Left lung (tissue), 14 donors: ENCODE measurements at regions of chr2 and their contacts with region 1.

Region 1: GRCh38 chr2:210195101-210195852 is 24.1 kb upstream of the KANSL1L start:
- DNase-seq: peak in 1 of 4 donors; percentile 60
- ATAC-seq: peak; percentile 38
- H3K4me3 ChIP-seq: no peak overlapping the region
- H3K27ac ChIP-seq: no peak overlapping the region
- H3K4me1 ChIP-seq: peaks cover 0 to 12% of the 10 kb centered on the region in 2 donors
- H3K27me3 ChIP-seq: no peaks in the 10 kb centered on the region
- CTCF ChIP-seq: peak; percentile 54 to 60

Region 2: DNA sequence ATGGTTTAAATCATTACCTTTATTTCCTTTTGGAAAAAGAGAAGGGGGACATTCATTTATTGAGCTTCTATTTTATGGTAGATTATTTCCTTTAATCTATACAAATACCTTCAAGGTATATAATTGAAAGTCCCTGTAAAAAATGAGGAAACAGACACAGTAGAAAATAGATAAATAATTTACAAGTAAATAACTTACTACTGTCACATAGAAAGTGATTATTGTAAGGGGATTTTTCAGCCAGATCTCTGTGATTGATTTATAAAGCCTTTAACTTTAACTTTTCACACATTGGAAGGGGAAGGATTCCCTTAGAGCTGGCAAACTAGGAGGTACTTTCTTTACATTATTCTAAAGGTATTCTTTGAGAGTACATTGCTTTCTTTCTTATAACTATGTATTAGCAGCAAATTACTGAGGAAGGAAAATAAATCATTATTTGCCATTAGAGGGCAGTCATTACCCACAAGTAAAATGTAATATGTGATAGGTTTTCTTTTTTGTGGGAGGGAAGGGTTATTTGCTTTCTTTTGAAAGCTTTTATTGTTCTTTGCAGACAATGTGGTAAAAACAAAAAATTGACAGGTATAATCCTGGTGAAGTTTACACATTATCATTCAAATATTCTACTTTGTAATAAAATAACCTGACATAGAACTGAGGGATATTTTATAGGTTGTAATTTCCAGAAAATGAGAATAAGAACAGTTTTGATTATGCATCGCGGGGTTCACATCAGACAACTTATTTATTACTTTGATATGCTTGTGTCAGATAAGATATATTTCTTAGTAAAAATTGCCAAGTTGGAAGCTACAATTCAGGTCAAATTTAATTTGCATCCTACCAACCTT is 217.7 kb before region 1 on chr2:
- intact Hi-C with region 1: loop called in 1 of 2 experiments (anchors 5 kb)
- DNase-seq: peak in 1 of 4 donors; percentile 44
- ATAC-seq: peak; percentile 61
- H3K4me3 ChIP-seq: no peak overlapping the region
- H3K27ac ChIP-seq: no peak overlapping the region
- H3K4me1 ChIP-seq: no peaks in the 10 kb centered on the region
- H3K27me3 ChIP-seq: no peaks in the 10 kb centered on the region
- CTCF ChIP-seq: peak; percentile 49 to 55

Region 3: DNA sequence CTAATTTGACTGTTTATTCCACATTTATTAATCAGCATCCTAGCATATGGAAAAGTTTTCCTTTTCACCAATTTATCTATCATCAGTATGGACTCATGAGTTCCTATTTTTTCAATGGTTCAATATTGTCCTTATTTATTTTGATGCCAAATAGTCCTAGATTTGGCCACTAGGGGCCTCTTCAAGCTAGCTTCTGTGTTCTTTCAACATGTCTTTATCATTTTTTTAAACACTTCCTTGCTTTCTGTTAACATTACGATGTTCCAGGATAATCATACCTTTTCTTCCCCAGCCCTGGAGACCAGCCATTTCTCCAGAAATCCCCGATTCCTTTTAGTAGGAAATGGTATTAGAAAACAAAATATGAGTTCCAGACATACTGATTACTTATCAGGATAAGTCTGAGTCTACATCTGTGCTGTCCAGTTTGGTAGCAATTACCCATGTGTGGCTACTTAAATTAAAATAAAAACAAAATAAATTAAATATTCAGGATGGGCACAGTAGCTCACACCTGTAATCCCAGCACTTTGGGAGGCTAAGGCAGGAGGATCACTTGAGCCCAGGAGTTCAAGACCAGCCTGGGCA is 122.3 kb before region 1 on chr2:
- intact Hi-C with region 1: loop called in 1 of 2 experiments (anchors 10 kb)
- DNase-seq: peak in 2 of 4 donors; percentile 3 to 30
- ATAC-seq: peak; percentile 35
- H3K4me3 ChIP-seq: no peak overlapping the region
- H3K27ac ChIP-seq: no peak overlapping the region
- H3K4me1 ChIP-seq: no peaks in the 10 kb centered on the region
- H3K27me3 ChIP-seq: no peaks in the 10 kb centered on the region
- CTCF ChIP-seq: peak; percentile 30 to 41